CD8-positive, alpha-beta memory T cell (primary cell): ENCODE measurements at regions of chr1 and their contacts with region 1.

Region 1: DNA sequence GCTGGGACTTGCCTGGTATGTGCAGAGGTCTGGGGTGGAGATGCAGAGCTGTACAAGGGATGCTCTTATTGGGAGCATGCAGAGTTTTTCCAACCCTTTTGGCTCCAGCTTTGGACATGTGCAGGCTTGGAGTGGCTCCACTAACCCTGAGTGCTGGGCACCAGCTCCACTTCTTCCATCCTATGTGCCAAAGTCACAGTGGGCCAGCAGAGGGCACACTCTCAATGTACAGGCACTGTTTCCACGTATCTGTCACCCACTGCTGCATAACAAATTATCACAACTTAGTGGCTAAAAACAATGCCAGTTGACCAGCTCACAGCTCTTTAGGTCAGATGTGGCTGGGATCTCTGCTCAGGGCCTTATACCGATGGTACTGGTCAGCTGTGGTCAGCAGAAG is 631.8 kb downstream of the AJAP1 start:
- DNase-seq: peak in 4 of 5 donors; percentile 6 to 66 (median 14)
- H3K4me3 ChIP-seq: no peak overlapping the region
- H3K4me3 Mint-ChIP-seq: no peak overlapping the region
- H3K27ac ChIP-seq: no peak overlapping the region
- H3K27ac Mint-ChIP-seq: peak overlapping the region in 2 of 8 donors; percentile 43 to 47
- H3K4me1 ChIP-seq: no peaks in the 10 kb centered on the region
- H3K4me1 Mint-ChIP-seq: peaks cover 0 to 13% (median 0%) of the 10 kb centered on the region in 3 donors
- H3K27me3 ChIP-seq: no peaks in the 10 kb centered on the region
- H3K27me3 Mint-ChIP-seq: peaks cover 0 to 5% of the 10 kb centered on the region in 2 donors

Region 2: DNA sequence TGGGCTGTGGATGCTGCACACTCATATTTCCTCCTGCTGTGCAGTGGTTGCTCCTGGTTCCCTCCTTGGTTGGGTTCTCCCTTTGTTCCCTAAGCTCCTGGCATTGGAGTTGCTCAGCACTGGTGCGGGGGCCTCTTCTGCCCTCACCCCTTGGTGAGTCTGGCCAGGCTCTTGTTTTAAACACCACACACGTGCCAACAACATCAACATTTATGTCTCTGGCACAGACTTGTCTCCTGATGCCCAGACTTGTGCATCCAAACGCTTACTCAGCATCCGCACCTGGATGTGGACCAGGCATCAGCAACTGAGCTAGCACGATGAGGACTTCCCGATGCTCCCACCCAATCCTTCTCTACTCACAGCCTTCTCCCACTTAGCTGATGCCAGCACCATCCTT is 78.3 kb after region 1 on chr1:
- CTCF ChIA-PET with region 1: no interaction called
- POLR2A ChIA-PET with region 1: no interaction called
- DNase-seq: no peak
- H3K4me3 ChIP-seq: no peak overlapping the region
- H3K4me3 Mint-ChIP-seq: no peak overlapping the region
- H3K27ac ChIP-seq: no peak overlapping the region
- H3K27ac Mint-ChIP-seq: peak overlapping the region in 1 of 8 donors; percentile 4
- H3K4me1 ChIP-seq: peaks cover 1% of the 10 kb centered on the region
- H3K4me1 Mint-ChIP-seq: peaks cover 0 to 6% (median 4%) of the 10 kb centered on the region in 3 donors
- H3K27me3 ChIP-seq: no peaks in the 10 kb centered on the region
- H3K27me3 Mint-ChIP-seq: peaks cover 6 to 9% of the 10 kb centered on the region in 2 donors

Region 3: DNA sequence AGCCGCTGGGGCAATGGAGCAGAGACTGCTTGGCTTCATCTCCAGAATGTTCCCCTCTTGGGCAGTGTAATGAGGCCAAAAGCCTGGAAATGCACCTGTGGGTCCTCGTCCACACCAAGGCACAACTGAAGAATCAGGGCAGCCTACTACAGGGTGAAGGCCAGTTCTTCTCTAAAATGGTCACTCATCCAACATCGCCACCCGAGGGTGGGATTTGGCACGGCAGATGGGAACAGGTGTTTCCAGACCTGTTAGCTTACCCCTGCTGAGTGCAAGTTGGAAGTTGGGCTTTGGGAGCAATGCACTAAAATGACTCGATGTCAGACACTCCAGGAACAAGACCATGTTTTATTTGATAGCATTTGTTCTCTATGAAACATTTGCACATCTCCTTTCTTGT is 162.2 kb after region 1 on chr1:
- CTCF ChIA-PET with region 1: interaction called, 20 read pairs
- POLR2A ChIA-PET with region 1: no interaction called
- DNase-seq: peak in 4 of 5 donors; percentile 16 to 59 (median 20)
- H3K4me3 ChIP-seq: no peak overlapping the region
- H3K4me3 Mint-ChIP-seq: no peak overlapping the region
- H3K27ac ChIP-seq: no peak overlapping the region
- H3K27ac Mint-ChIP-seq: no peak overlapping the region
- H3K4me1 ChIP-seq: no peaks in the 10 kb centered on the region
- H3K4me1 Mint-ChIP-seq: no peaks in the 10 kb centered on the region
- H3K27me3 ChIP-seq: no peaks in the 10 kb centered on the region
- H3K27me3 Mint-ChIP-seq: peaks cover 5 to 8% of the 10 kb centered on the region in 2 donors

Region 4: GRCh38 chr1:5481889-5482288 is 195.6 kb after region 1 on chr1:
- CTCF ChIA-PET with region 1: interaction called, 12 read pairs
- POLR2A ChIA-PET with region 1: no interaction called
- DNase-seq: peak; percentile 6 to 62 (median 43)
- H3K4me3 ChIP-seq: no peak overlapping the region
- H3K4me3 Mint-ChIP-seq: peak overlapping the region in 5 of 7 donors; percentile 18 to 66 (median 32)
- H3K27ac ChIP-seq: no peak overlapping the region
- H3K27ac Mint-ChIP-seq: peak overlapping the region in 3 of 8 donors; percentile 60 to 82 (median 64)
- H3K4me1 ChIP-seq: peaks cover 11% of the 10 kb centered on the region
- H3K4me1 Mint-ChIP-seq: peaks cover 8 to 13% (median 13%) of the 10 kb centered on the region in 3 donors
- H3K27me3 ChIP-seq: no peaks in the 10 kb centered on the region
- H3K27me3 Mint-ChIP-seq: peaks cover 5 to 9% of the 10 kb centered on the region in 2 donors